ENCODE measurements at regions of chr7 and their contacts with region 1.

Region 1: GRCh38 chr7:92498557-92498956 is 20.8 kb upstream of the ERVW-1 start:
- DNase-seq: no peak
- ATAC-seq: no peak
- H3K4me3 ChIP-seq: no peak overlapping the region
- H3K4me3 Mint-ChIP-seq: no peak overlapping the region
- H3K27ac ChIP-seq: no peak overlapping the region
- H3K27ac Mint-ChIP-seq: no peak overlapping the region
- H3K4me1 ChIP-seq: no peaks in the 10 kb centered on the region
- H3K4me1 Mint-ChIP-seq: no peaks in the 10 kb centered on the region
- H3K27me3 ChIP-seq: no peaks in the 10 kb centered on the region
- H3K27me3 Mint-ChIP-seq: no peaks in the 10 kb centered on the region

Region 2: GRCh38 chr7:92002720-92003119 is 495.8 kb before region 1 on chr7:
- CTCF ChIA-PET with region 1: no interaction called
- POLR2A ChIA-PET with region 1: no interaction called
- DNase-seq: no peak
- ATAC-seq: no peak
- H3K4me3 ChIP-seq: no peak overlapping the region
- H3K4me3 Mint-ChIP-seq: no peak overlapping the region
- H3K27ac ChIP-seq: no peak overlapping the region
- H3K27ac Mint-ChIP-seq: no peak overlapping the region
- H3K4me1 ChIP-seq: no peaks in the 10 kb centered on the region
- H3K4me1 Mint-ChIP-seq: no peaks in the 10 kb centered on the region
- H3K27me3 ChIP-seq: no peaks in the 10 kb centered on the region
- H3K27me3 Mint-ChIP-seq: no peaks in the 10 kb centered on the region

Region 3: DNA sequence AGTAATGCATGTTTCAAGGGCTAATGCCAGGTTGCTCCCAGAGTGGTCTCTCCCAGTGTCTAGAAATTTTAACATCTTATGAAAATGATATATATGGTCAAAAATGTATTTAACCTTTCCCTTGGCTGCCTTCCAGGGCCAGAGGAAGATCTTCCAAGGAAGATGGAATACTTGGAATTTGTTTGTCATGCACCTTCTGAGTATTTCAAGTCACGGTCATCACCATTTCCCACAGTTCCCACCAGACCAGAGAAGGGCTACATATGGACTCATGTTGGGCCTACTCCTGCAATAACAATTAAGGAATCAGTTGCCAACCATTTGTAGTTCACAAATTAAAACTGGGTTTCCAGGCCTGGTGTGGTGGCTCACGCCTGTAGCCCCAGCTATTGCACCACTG is 42.3 kb before region 1 on chr7:
- CTCF ChIA-PET with region 1: no interaction called
- POLR2A ChIA-PET with region 1: interaction called in 1 of 2 experiments, 10 read pairs
- DNase-seq: no peak
- ATAC-seq: no peak
- H3K4me3 ChIP-seq: no peak overlapping the region
- H3K4me3 Mint-ChIP-seq: no peak overlapping the region
- H3K27ac ChIP-seq: no peak overlapping the region
- H3K27ac Mint-ChIP-seq: no peak overlapping the region
- H3K4me1 ChIP-seq: no peaks in the 10 kb centered on the region
- H3K4me1 Mint-ChIP-seq: no peaks in the 10 kb centered on the region
- H3K27me3 ChIP-seq: no peaks in the 10 kb centered on the region
- H3K27me3 Mint-ChIP-seq: no peaks in the 10 kb centered on the region